Posterior cingulate gyrus (tissue), 11 donors: ENCODE measurements at regions of chr1 and their contacts with region 1.

Region 1: DNA sequence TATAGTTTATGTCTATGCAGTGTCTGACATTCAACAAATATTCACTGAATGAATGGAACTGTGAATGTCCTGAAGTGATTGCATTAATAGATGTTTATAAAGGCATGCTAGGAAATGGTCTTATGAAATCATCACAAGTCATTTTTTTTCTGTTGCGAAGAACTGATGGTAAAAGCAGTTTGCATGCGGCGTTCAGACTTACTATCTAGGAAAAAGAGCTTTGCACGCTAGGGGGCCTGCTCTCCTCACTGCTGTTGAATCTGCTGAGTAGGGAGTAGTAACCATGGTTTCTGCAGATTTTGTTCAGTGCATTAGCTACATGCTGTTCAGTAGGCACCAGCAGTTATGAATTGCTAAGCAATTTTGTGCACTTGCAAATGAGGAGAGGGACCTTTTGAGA is 57.9 kb downstream of the CENPF start:
- DNase-seq: peak; percentile 43 to 94 (median 68)

Region 2: GRCh38 chr1:214895011-214895600 is 234.2 kb after region 1 on chr1:
- intact Hi-C with region 1: no loop called
- DNase-seq: no peak

Region 3: DNA sequence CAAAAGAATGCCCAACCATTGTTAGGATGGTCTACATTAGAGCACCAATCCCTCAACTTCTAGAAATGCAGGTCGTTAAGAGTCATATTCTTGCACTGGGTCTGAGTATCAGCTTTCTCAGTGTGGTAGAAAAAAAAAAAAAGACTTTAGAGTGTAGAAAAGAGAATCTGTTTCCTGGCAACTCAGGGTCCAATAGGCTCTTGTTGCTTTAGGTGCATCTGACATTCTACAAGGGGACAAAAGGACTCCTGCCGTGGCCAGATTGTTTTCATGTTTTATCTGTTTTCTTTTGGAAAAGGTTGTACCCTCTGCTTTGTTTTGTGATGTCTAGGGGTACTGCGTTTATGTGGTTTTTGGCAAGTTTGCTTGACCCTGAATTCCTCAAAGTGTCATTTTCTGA is 316.2 kb after region 1 on chr1:
- intact Hi-C with region 1: no loop called
- DNase-seq: no peak

Region 4: GRCh38 chr1:215146341-215146826 is 485.5 kb after region 1 on chr1:
- intact Hi-C with region 1: loop called (anchors 5 kb)
- DNase-seq: no peak